Left lung (tissue), 14 donors: ENCODE measurements at regions of chr1 and their contacts with region 1.

Region 1: GRCh38 chr1:109277434-109278204 is 5.3 kb downstream of the PSRC1 start:
- DNase-seq: peak; percentile 46 to 92 (median 82)
- ATAC-seq: peak; percentile 67
- H3K4me3 ChIP-seq: no peak overlapping the region
- H3K27ac ChIP-seq: peak overlapping the region; percentile 25 to 39
- H3K4me1 ChIP-seq: peaks cover 26 to 27% of the 10 kb centered on the region in 2 donors
- H3K27me3 ChIP-seq: no peaks in the 10 kb centered on the region
- CTCF ChIP-seq: peak; percentile 80 to 91

Region 2: DNA sequence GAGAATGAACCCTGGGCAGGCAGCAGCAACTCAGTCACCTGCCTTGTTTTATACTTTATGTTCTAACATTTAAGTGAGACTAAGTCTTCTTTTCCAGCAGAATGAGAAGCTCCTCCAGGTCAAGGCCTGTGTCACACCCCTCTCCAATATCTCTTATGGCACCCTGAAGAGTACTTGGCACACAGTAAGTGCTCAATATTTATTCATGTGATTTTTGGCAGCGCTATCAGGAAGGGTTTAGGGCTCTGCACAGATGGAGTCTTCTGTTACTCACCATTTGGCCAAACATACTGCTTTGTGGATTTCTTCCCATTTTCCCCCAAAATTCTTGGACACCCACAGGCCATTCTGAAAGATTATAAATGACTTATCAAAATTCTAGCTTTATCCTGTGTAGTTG is 73.0 kb after region 1 on chr1:
- intact Hi-C with region 1: no loop called
- DNase-seq: no peak
- ATAC-seq: peak; percentile 90
- H3K4me3 ChIP-seq: no peak overlapping the region
- H3K27ac ChIP-seq: no peak overlapping the region
- H3K4me1 ChIP-seq: peaks cover 0 to 11% of the 10 kb centered on the region in 2 donors
- H3K27me3 ChIP-seq: no peaks in the 10 kb centered on the region
- CTCF ChIP-seq: no peak

Region 3: DNA sequence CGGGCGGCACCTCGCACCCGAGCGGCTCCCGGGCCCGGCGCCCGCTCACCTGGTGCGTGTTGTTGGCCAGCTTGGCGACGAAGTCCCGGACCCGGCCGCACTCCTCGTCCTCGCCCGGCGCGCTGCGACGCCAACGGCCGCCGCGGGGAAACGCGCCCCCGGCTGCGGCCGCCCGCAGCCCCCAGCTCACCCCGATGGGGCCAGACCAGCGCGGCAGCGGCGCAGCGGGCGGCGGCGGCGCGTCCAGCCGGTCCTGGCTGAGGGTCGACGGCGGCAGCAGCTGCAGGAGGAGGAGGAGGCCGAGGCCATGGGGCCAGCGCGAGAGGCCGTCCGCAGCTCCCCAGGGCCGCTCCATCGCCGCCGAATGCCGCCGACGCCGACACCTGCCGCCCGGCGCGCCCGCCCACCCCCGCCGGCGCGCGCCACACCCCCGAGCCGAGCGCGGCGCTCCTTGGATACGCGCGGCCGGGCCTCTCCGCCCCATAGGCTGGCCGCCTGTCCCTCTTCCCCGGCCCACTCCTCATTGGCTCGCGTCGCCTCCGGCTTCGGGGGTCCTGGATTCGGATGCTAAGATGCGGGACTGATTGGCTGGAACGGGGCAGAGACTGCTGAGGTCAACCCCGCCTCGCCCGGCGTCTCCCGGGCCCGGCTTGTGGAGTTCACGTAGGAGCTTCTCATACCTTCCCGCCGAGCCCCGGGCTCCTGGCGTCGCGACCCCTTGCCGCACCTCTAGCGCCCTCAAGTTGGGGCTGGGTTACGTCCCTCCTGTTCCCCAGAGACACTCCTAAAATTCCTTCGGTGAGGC is 120.1 kb after region 1 on chr1 and contains the start of gene SORT1:
- intact Hi-C with region 1: loop called in 1 of 2 experiments (anchors 5 kb)
- DNase-seq: peak; percentile 71 to 94 (median 88)
- ATAC-seq: peak; percentile 93
- H3K4me3 ChIP-seq: peak within 1 kb of the TSS; percentile 50
- H3K27ac ChIP-seq: peak within 1 kb of the TSS; percentile 69 to 86
- H3K4me1 ChIP-seq: peaks cover 29 to 58% of the 10 kb centered on the region in 2 donors
- H3K27me3 ChIP-seq: no peaks in the 10 kb centered on the region
- CTCF ChIP-seq: no peak
- polyA plus RNA-seq, gene SORT1: 39.4 to 46.9 (median 45.6) TPM

Region 4: DNA sequence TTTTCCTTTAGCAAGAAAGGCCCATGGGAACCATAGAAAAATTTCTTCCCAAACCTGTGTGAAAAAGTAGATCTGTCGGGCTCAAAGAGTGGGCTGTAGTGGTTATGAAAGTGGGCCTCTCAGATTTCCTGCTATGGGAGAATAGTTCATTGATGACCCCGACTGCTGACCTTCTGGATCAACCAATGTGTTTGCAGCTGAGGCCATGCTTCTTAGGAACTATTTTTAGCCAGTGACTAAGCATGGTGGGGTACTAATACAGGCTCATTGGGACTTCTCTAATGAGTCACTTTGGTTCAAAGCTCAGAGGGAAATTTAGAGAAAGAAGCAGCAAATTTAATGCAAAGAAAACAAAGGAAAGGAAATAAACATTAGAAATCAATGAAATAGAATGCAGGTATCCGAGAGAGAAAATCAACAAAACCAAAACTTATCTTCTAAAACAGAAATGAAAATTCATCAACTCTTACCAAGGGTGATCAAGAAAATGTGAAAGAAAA is 161.2 kb after region 1 on chr1:
- intact Hi-C with region 1: no loop called
- DNase-seq: no peak
- ATAC-seq: peak; percentile 33
- H3K4me3 ChIP-seq: no peak overlapping the region
- H3K27ac ChIP-seq: no peak overlapping the region
- H3K4me1 ChIP-seq: no peaks in the 10 kb centered on the region
- H3K27me3 ChIP-seq: peaks cover 0 to 5% of the 10 kb centered on the region in 2 donors
- CTCF ChIP-seq: no peak

Region 5: DNA sequence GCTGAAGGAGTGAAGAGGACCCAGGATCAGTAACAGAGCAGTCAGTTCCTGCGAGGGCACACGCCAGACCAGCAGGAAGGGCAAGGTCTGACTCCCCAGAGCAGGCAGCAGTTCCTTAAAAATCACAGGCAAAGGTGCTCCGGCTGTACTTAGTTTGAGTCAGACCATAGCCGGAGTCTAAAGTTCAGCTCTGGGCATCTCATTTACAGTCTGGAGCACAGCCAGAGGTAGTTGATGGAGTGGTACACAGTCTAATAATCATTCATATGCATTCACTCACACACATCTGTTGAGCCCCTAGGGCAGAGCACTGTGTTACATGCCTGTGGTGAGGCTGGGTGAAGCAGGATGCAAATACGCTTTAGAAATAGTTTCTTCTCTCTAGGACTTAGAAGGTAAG is 239.3 kb after region 1 on chr1:
- intact Hi-C with region 1: no loop called
- DNase-seq: no peak
- ATAC-seq: no peak
- H3K4me3 ChIP-seq: no peak overlapping the region
- H3K27ac ChIP-seq: no peak overlapping the region
- H3K4me1 ChIP-seq: no peaks in the 10 kb centered on the region
- H3K27me3 ChIP-seq: no peaks in the 10 kb centered on the region
- CTCF ChIP-seq: no peak